ENCODE measurements at regions of chr14 and their contacts with region 1.

Region 1: GRCh38 chr14:34098045-34098984 is 147.4 kb upstream of the EGLN3 start:
- DNase-seq: peak in 1 of 2 experiments; percentile 47
- H3K4me3 ChIP-seq: no peak overlapping the region
- H3K27ac ChIP-seq: no peak overlapping the region
- H3K4me1 ChIP-seq: no peaks in the 10 kb centered on the region
- H3K27me3 ChIP-seq: no peaks in the 10 kb centered on the region
- CTCF ChIP-seq: peak in 2 of 3 experiments; percentile 56 to 69; a peak in 3 of 4 replicates
- EP300 ChIP-seq: no peak
- POLR2A ChIP-seq: no peak
- RAD21 ChIP-seq: peak; percentile 83 to 89

Region 2: GRCh38 chr14:33839193-33840076 is 258.9 kb before region 1 on chr14:
- CTCF ChIA-PET with region 1: interaction called, 88 read pairs
- POLR2A ChIA-PET with region 1: no interaction called
- DNase-seq: no peak
- H3K4me3 ChIP-seq: no peak overlapping the region
- H3K27ac ChIP-seq: no peak overlapping the region
- H3K4me1 ChIP-seq: peaks cover 0 to 9% (median 6%) of the 10 kb centered on the region in 4 experiments; a peak in 5 of 7 replicates
- H3K27me3 ChIP-seq: no peaks in the 10 kb centered on the region
- CTCF ChIP-seq: peak; percentile 69 to 75 (median 74)
- EP300 ChIP-seq: no peak
- POLR2A ChIP-seq: no peak
- RAD21 ChIP-seq: peak; percentile 68 to 76

Region 3: DNA sequence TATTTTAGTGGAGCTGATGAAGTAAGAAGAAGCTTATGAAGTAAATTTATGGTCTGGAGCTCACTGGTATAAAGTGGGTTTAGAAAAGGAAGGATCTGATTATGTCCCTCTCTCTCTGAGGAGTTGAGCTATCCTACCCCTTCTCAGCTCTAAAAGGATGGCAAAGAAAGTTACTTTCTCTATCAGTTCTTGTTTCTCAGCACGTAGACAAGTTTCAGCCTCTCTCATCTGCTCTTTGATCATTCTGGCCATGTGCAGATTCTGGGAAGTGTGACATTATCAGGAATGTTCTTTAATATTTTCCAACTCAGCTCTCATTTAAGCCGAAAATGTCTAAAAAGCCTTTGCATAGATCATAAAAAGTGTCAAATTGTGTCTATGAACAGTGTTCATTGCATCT is 141.7 kb before region 1 on chr14:
- CTCF ChIA-PET with region 1: interaction called, 15 read pairs
- POLR2A ChIA-PET with region 1: no interaction called
- DNase-seq: no peak
- H3K4me3 ChIP-seq: no peak overlapping the region
- H3K27ac ChIP-seq: no peak overlapping the region
- H3K4me1 ChIP-seq: peaks cover 0 to 3% (median 1%) of the 10 kb centered on the region in 4 experiments; a peak in 3 of 7 replicates
- H3K27me3 ChIP-seq: no peaks in the 10 kb centered on the region
- CTCF ChIP-seq: no peak
- EP300 ChIP-seq: no peak
- POLR2A ChIP-seq: no peak
- RAD21 ChIP-seq: no peak

Region 4: GRCh38 chr14:34113005-34113511 is 14.7 kb after region 1 on chr14:
- CTCF ChIA-PET with region 1: interaction called, 24 read pairs
- POLR2A ChIA-PET with region 1: no interaction called
- DNase-seq: no peak
- H3K4me3 ChIP-seq: no peak overlapping the region
- H3K27ac ChIP-seq: no peak overlapping the region
- H3K4me1 ChIP-seq: no peaks in the 10 kb centered on the region
- H3K27me3 ChIP-seq: no peaks in the 10 kb centered on the region
- CTCF ChIP-seq: no peak
- EP300 ChIP-seq: no peak
- POLR2A ChIP-seq: no peak
- RAD21 ChIP-seq: no peak

Region 5: DNA sequence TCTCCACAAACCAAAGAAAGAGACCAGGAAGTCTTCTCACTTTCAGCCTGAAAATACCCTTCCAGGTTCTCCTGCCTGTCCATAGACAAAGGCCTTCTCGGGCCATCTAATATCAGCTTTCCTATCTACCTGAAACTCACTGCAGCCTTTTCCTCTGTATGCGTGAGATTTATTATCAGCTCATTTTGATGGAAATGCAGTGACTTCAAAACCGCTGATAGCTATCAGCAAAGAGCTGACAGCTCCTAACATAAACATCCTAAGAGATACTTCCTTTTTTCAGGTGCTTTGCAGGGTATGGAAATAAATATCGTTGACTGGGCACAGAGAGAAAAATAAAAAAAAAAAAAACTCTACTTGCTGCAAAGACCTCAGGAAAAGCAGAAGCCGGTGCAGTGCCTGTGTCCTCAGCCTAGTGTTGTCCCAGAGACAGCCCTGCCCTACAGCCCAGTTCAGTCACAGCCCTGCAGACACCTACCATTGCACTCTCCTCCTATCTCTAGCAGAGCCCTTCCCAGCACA is 67.6 kb after region 1 on chr14:
- CTCF ChIA-PET with region 1: no interaction called
- POLR2A ChIA-PET with region 1: no interaction called
- DNase-seq: no peak
- H3K4me3 ChIP-seq: no peak overlapping the region
- H3K27ac ChIP-seq: no peak overlapping the region
- H3K4me1 ChIP-seq: no peaks in the 10 kb centered on the region
- H3K27me3 ChIP-seq: no peaks in the 10 kb centered on the region
- CTCF ChIP-seq: no peak
- EP300 ChIP-seq: no peak
- POLR2A ChIP-seq: no peak
- RAD21 ChIP-seq: no peak

Region 6: GRCh38 chr14:34322940-34323418 is 224.7 kb after region 1 on chr14:
- CTCF ChIA-PET with region 1: interaction called, 11 read pairs
- POLR2A ChIA-PET with region 1: no interaction called
- DNase-seq: peak in 1 of 2 experiments; percentile 79
- H3K4me3 ChIP-seq: no peak overlapping the region
- H3K27ac ChIP-seq: no peak overlapping the region
- H3K4me1 ChIP-seq: no peaks in the 10 kb centered on the region
- H3K27me3 ChIP-seq: no peaks in the 10 kb centered on the region
- CTCF ChIP-seq: peak; percentile 56 to 74 (median 58)
- EP300 ChIP-seq: no peak
- POLR2A ChIP-seq: no peak
- RAD21 ChIP-seq: peak; percentile 33 to 47; a peak in 3 of 4 replicates